ENCODE measurements at regions of chr20 and their contacts with region 1.

Region 1: GRCh38 chr20:50070991-50071888 is 41.7 kb downstream of the UBE2V1 start:
- DNase-seq: peak; percentile 93
- ATAC-seq: peak; percentile 97
- H3K4me3 ChIP-seq: peak overlapping the region; percentile 39
- H3K27ac ChIP-seq: peak overlapping the region; percentile 16
- H3K4me1 ChIP-seq: peaks cover 15% of the 10 kb centered on the region
- H3K27me3 ChIP-seq: no peaks in the 10 kb centered on the region
- CTCF ChIP-seq: peak; percentile 100

Region 2: DNA sequence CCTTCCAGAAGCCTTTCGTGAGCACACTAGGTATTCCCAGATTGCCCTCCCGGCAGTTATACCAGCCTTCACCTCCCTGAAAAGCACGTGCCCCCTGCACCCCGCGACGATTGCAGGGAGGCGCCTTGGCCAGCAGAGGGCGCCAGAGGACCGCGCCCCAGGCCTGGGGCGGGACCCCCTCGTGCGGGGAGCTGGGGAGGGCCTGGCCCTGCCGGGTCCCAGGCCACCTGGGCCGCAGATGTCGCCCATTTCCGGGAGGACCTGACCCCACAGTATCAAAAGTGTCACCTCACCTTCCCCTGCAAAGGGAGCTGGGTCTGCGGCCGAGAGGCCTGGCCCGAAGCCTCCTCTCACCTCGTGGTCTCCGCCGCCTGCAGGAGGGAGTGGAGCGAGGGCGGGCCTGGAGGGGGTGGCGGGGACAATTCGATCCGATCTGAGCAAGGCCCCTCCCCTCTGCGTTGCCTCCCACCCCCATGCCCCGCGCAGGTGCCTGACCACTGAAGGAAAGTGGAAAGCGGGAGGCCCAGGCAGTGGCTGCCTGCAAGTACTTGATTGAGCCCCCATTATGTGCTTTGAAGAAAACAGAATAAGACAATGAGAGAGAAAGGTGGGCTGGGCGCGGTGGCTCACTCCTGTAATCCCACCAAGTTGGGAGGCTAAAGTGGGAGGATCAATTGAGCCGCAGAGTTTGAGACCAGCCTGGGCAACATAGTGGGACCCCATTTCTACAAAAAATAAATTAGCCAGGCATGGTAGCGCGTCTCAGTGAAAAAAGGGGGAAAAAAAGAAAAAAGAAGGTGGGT is 92.0 kb before region 1 on chr20:
- intact Hi-C with region 1: loop called (anchors 5 kb)
- DNase-seq: peak; percentile 59
- ATAC-seq: peak; percentile 69 to 78
- H3K4me3 ChIP-seq: peak overlapping the region; percentile 34
- H3K27ac ChIP-seq: no peak overlapping the region
- H3K4me1 ChIP-seq: peaks cover 32% of the 10 kb centered on the region
- H3K27me3 ChIP-seq: no peaks in the 10 kb centered on the region
- CTCF ChIP-seq: peak; percentile 99

Measured in lower lobe of right lung (tissue), 2 donors.